Adrenal gland (tissue), 19 donors: ENCODE measurements at regions of chr22 and their contacts with region 1.

Region 1: DNA sequence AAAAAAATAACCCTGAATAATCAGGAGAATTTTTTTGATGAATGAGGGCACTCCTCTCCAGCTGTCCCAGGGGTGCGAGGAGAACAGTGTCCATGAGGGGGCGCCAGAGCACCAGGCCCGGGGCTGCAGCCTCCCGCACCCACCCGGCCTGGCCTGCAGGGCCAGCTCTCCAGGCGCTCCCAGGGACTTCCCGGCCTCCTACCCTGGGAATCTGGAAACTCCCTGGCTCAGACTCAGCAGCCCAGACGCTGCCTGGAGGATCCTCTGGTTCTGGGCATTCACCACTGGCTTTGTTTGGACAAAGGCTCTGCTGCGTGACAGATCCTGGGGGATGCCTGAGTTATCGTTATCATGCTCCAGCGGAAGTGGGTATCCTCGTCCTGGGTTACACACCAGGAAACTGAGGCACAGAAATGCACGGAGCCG is 31.0 kb downstream of the MCM5 start:
- DNase-seq: peak; percentile 90 to 95 (median 92)
- H3K4me3 ChIP-seq: no peak overlapping the region
- H3K27ac ChIP-seq: peak overlapping the region in 2 of 5 donors; percentile 7 to 17
- H3K4me1 ChIP-seq: peaks cover 0 to 4% of the 10 kb centered on the region in 2 donors
- H3K27me3 ChIP-seq: no peaks in the 10 kb centered on the region
- CTCF ChIP-seq: peak; percentile 98 to 100 (median 99)
- POLR2A ChIP-seq: no peak

Region 2: DNA sequence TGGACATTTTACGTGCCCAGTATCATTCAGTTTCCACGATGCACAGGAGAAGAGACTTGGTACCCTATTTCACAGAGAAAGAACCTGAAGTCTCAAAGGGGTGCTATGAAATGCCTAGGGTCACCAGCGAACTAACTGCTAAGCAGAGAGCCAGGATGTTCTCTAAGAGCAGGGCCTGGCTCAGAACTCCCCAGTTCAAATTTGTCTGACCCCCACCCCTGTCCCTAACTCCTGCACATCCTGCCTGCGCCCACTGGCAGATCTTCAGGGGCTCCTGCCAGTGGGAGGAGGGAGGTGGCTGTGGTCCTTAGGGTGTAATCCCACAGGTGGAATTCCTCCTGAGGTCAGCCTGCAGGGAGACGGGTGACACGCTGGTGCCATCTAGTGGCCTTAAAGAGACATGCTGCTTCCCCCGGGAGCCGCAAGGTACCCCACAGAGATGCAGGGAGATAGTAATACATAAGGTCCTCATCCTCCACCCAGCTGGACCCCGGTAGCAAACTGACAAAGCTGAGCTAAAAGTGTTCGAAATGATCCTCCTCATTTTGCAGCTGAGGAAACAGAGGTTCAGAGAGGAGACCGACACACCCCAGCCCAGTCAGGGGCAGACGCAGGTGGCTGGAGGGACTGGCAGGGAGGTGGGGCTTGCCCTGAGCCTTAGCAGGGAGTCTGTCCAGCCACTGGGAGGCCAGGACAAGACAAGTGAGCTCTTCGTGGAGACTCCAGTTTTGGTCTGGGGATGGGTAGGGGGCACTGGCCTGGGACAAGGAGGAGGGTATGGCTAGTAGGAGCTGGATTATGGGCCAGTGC is 152.2 kb after region 1 on chr22:
- intact Hi-C with region 1: loop called (anchors 2 to 5 kb)
- DNase-seq: peak; percentile 41 to 84 (median 65)
- H3K4me3 ChIP-seq: no peak overlapping the region
- H3K27ac ChIP-seq: no peak overlapping the region
- H3K4me1 ChIP-seq: no peaks in the 10 kb centered on the region
- H3K27me3 ChIP-seq: no peaks in the 10 kb centered on the region
- CTCF ChIP-seq: peak; percentile 81 to 95 (median 90)
- POLR2A ChIP-seq: no peak

Region 3: GRCh38 chr22:35589071-35589952 is 158.4 kb after region 1 on chr22:
- intact Hi-C with region 1: loop called in 1 of 2 experiments (anchors 5 kb)
- DNase-seq: peak; percentile 36 to 90 (median 76)
- H3K4me3 ChIP-seq: no peak overlapping the region
- H3K27ac ChIP-seq: peak overlapping the region in 1 of 5 donors; percentile 43
- H3K4me1 ChIP-seq: peaks cover 0 to 6% of the 10 kb centered on the region in 2 donors
- H3K27me3 ChIP-seq: no peaks in the 10 kb centered on the region
- CTCF ChIP-seq: no peak
- POLR2A ChIP-seq: no peak

Region 4: GRCh38 chr22:35622191-35622913 is 191.4 kb after region 1 on chr22:
- intact Hi-C with region 1: loop called in 1 of 2 experiments (anchors 2 kb)
- DNase-seq: peak; percentile 43 to 67 (median 51)
- H3K4me3 ChIP-seq: no peak overlapping the region
- H3K27ac ChIP-seq: peak overlapping the region in 1 of 5 donors; percentile 22
- H3K4me1 ChIP-seq: peaks cover 0 to 13% of the 10 kb centered on the region in 2 donors
- H3K27me3 ChIP-seq: no peaks in the 10 kb centered on the region
- CTCF ChIP-seq: no peak
- POLR2A ChIP-seq: no peak